Posterior vena cava (tissue), 2 donors: ENCODE measurements at regions of chr22 and their contacts with region 1.

Region 1: GRCh38 chr22:44458044-44459020 is 39.7 kb downstream of the RTL6 start:
- DNase-seq: no peak

Region 2: DNA sequence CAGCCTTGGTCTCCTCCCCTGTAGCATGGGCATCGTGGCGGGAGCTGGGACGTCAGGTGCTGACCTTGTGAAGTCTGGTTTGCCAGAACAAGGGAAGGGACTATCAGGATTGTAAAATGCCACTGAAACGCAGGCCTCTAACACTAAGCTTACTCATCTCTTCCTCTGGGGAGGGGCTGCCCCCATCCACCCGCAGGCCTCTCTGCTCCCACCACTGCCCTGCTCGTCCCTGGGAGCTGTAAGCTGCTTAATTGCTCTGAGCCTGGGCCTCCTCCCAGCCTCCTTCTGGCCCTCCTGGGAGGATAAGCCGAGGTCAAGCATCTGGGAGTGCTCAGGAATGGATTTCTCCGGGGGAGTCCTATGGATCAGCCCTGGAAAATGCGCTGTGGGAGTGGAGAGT is 154.0 kb before region 1 on chr22:
- intact Hi-C with region 1: no loop called
- DNase-seq: no peak

Region 3: DNA sequence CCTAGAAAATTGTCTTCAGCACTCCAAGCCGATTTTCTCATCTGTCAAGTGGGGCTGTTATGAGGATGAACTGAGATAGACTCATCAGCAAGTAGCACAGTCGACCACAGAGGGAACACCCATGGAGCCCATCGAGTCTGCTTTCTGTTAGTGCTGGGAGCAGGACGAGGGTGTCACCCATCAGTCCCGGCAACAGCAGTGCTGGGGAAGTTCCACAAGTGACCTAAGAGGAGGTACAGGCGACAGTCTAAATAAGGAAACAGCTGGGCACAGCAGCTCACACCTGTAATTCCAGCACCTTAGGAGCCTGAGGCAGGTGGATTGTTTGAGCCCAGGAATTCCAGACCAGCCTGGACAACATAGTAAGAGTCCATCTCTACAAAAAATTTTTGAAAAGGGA is 30.0 kb after region 1 on chr22:
- intact Hi-C with region 1: loop called in 1 of 2 experiments (anchors 1 kb)
- DNase-seq: no peak

Region 4: GRCh38 chr22:44955102-44955501 is 496.8 kb after region 1 on chr22:
- intact Hi-C with region 1: no loop called
- DNase-seq: no peak